Activated B cell treated with CpG ODN at 0.5 μM for 24 hours (primary cell): ENCODE measurements at regions of chr10 and their contacts with region 1.

Region 1: DNA sequence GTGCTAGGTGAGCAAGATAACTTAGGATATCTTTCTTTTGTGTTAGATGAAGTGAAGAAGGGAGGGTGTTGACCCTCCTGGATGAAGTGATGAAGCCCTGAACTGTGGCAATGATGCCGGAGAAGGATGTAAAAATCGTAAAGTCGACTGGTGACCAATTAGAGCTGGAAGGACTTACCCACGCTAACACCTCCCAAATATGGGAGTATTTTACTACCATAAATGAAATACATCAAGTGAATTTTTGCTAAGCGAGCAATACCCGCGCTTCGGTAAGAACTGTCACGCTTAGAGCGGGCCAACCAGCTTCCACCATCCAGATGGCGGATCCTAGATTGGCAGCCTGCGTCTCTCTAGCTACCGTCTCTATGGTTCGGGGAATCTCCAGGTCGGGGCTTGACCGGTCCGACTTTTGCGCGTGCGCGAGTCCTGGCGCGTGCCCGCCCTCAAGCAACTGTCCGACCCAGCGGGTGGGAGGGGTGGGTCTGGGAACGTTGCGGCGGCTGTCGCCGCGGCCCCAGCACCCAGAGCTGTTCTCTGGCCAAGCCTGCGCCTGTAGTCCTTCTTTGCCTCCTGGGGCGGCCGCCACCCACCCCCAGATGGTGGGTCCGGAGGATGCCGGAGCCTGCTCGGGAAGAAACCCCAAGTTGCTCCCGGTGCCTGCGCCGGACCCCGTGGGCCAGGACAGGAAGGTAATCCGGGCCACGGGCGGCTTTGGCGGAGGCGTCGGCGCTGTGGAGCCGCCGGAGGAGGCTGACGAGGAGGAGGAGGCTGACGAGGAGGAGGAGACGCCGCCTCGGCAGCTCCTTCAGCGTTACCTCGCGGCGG is at the start of gene TBC1D12:
- DNase-seq: peak; percentile 56
- ATAC-seq: peak; percentile 54
- H3K4me3 Mint-ChIP-seq: peak within 1 kb of the TSS; percentile 88
- H3K27ac Mint-ChIP-seq: peak within 1 kb of the TSS; percentile 83
- H3K4me1 Mint-ChIP-seq: peaks cover 15% of the 10 kb centered on the region
- H3K27me3 Mint-ChIP-seq: peaks cover 19% of the 10 kb centered on the region
- CTCF ChIP-seq: no peak
- total RNA-seq, gene TBC1D12: 6.1 and 7.0 TPM in 2 replicates

Region 2: DNA sequence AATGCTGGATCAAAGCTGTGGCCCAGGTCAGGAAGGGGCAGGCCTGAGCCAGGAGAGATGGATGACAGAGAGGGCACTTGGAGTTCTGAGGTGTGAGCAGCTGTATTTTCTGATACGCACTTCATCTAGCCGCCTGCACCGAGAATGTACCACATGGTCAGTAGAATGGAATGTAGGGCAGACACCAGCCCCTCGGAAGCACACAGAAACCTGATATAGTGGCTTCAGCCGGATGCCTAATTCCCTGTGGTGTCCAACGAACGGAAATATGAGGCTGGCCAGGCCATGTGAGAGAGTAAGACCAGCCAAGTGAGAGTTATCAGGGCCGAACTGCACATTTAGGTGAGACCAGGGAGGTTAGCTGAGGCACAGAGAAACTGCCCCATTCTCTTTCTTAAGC is 455.2 kb before region 1 on chr10:
- CTCF ChIA-PET with region 1: no interaction called
- POLR2A ChIA-PET with region 1: no interaction called
- intact Hi-C with region 1: no loop called
- DNase-seq: no peak
- ATAC-seq: no peak
- H3K4me3 Mint-ChIP-seq: no peak overlapping the region
- H3K27ac Mint-ChIP-seq: no peak overlapping the region
- H3K4me1 Mint-ChIP-seq: no peaks in the 10 kb centered on the region
- H3K27me3 Mint-ChIP-seq: no peaks in the 10 kb centered on the region
- CTCF ChIP-seq: no peak

Region 3: DNA sequence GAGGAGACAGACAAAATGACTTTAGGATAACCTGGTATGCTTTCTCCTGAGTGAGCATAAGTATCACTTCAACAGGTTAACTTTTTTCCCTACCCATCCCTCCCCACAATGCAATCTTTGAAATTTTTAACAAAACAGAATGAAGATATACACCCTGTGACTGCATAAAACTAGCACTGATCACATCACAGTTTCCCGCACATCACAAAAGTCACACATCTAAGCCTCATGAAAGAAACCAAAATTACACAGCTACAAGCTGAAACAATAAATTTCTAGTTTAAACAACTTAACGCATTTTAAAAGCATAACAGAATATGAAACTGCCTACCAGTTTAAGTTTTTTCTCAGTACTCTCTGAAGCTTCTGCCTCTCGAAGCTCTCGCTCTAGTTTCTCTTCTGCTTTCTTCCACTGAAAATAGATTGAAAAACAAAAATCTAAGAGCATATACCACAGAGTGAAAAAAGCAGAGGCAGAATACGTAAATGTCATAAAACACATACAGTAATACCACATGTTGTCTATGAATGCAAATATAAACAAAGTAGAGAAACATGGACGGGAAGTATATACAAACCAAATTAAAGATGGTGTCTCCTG is 57.6 kb before region 1 on chr10:
- CTCF ChIA-PET with region 1: interaction called, 3 read pairs
- POLR2A ChIA-PET with region 1: interaction called, 6 read pairs
- intact Hi-C with region 1: loop called (anchors 5 kb)
- DNase-seq: no peak
- ATAC-seq: peak; percentile 91
- H3K4me3 Mint-ChIP-seq: peak overlapping the region; percentile 79
- H3K27ac Mint-ChIP-seq: peak overlapping the region; percentile 90
- H3K4me1 Mint-ChIP-seq: peaks cover 31% of the 10 kb centered on the region
- H3K27me3 Mint-ChIP-seq: no peaks in the 10 kb centered on the region
- CTCF ChIP-seq: no peak

Region 4: DNA sequence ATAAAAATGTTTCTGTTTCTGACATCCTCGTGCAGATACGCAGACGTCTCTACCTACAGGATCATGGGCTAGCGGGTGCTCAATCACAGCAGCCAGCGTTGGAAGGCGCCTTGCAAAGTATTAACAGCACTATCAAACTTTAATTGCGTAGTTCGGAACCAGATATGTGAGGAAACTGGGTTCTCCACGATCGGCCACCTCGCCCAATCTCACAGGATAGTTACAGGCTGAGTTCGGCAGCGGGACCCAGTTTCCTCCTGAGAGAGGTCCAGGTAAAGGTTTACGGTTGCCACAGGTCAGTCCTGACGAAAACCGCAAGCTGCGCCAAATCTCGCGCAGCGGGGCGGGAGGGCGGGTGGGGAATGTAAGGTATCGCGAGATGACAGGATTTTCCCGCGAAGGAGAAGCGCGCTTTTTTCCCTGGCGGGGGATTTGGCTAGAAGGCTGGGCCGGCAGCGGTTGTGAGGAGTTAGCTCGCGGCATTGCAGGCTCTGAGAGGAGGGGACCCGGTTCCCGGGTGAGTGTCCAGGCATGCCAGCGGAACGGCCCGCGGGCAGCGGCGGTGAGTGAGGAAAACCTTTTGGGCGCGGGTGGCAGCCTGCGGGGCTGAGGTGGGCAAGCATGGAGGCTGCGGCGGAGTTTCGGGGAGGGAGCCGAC is 143.3 kb after region 1 on chr10 and contains the start of gene HELLS:
- CTCF ChIA-PET with region 1: no interaction called
- POLR2A ChIA-PET with region 1: no interaction called
- intact Hi-C with region 1: loop called (anchors 1 kb)
- DNase-seq: peak; percentile 60
- ATAC-seq: peak; percentile 81
- H3K4me3 Mint-ChIP-seq: peak within 1 kb of the TSS; percentile 99
- H3K27ac Mint-ChIP-seq: peak within 1 kb of the TSS; percentile 87
- H3K4me1 Mint-ChIP-seq: peaks cover 23% of the 10 kb centered on the region
- H3K27me3 Mint-ChIP-seq: peaks cover 2% of the 10 kb centered on the region
- CTCF ChIP-seq: no peak
- total RNA-seq, gene HELLS: 23.8 and 27.3 TPM in 2 replicates